ENCODE measurements at regions of chr13 and their contacts with region 1.

Region 1: GRCh38 chr13:109156181-109156935 is 526.9 kb downstream of the MYO16 start:
- DNase-seq: peak; percentile 86
- ATAC-seq: peak; percentile 81
- H3K4me3 ChIP-seq: no peak overlapping the region
- H3K27ac ChIP-seq: peak overlapping the region; percentile 99
- H3K4me1 ChIP-seq: peaks cover 25% of the 10 kb centered on the region
- H3K27me3 ChIP-seq: no peaks in the 10 kb centered on the region
- CTCF ChIP-seq: no peak
- POLR2A ChIP-seq: no peak
- RAD21 ChIP-seq: no peak

Region 2: DNA sequence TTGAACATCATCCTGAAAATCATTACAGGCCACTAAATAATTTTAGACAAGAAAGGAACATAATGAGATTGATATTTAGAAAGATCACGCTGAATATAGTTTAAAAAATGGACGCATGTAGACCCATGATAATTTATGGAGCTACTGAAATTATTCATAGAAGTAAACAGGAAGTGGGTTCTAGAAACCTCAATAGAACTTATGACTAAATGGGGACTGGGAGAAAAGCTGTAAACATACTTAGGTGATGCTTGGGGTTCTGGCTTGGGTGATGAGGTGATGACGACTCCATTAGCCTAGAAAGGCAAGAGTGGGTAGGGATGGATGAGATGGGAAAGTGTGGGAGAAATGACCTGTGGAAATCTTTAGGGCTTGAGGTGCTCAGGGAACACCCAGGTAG is 42.9 kb before region 1 on chr13:
- CTCF ChIA-PET with region 1: no interaction called
- POLR2A ChIA-PET with region 1: no interaction called
- dilution Hi-C with region 1: no loop called
- in situ Hi-C with region 1: no loop called
- intact Hi-C with region 1: no loop called
- DNase-seq: no peak
- ATAC-seq: no peak
- H3K4me3 ChIP-seq: no peak overlapping the region
- H3K27ac ChIP-seq: no peak overlapping the region
- H3K4me1 ChIP-seq: no peaks in the 10 kb centered on the region
- H3K27me3 ChIP-seq: peaks cover 12% of the 10 kb centered on the region
- CTCF ChIP-seq: no peak
- POLR2A ChIP-seq: no peak
- RAD21 ChIP-seq: no peak

Region 3: GRCh38 chr13:109243311-109243951 is 87.1 kb after region 1 on chr13:
- CTCF ChIA-PET with region 1: no interaction called
- POLR2A ChIA-PET with region 1: interaction called, 3 read pairs
- dilution Hi-C with region 1: no loop called
- in situ Hi-C with region 1: no loop called
- intact Hi-C with region 1: loop called (anchors 5 kb)
- DNase-seq: peak; percentile 91
- ATAC-seq: peak; percentile 96
- H3K4me3 ChIP-seq: peak overlapping the region; percentile 1; the same call in 1 of the 2 replicates
- H3K27ac ChIP-seq: peak overlapping the region; percentile 83
- H3K4me1 ChIP-seq: peaks cover 5% of the 10 kb centered on the region; the same call in 1 of the 2 replicates
- H3K27me3 ChIP-seq: no peaks in the 10 kb centered on the region
- CTCF ChIP-seq: no peak
- POLR2A ChIP-seq: no peak
- RAD21 ChIP-seq: no peak

Region 4: DNA sequence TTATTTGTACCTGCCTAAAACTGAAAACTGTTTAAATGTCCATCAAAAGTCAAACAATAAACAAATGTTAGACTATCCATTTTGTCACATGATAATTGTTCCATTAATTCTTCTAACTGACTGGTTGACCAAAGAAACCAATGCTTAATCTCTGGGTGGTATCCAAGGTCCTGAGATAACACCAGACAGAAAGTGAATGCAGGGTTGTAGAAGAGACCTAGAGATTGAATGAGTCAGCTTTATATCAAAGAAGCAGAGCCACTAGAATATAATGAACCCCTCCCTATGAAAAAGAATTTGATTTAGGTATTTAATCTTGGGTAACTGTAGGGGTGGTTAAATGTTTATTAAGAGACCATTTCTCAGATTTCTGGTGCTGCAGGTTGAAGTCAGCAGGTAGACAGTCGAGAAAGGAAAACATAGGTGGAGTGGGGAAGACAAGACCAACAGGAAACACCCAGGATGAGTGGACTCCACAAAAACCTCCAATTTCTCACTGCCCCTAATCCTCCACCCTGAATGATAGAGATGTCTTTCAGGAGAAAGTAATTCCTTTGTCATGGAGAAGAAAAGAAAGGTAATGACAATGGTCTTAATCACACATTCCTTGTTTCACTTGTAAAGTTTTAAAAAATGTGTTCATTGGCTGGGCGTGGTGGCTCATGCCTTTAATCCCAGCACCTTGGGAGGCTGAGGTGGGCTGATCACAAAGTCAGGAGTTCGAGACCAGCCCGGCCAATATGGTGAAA is 93.6 kb after region 1 on chr13:
- CTCF ChIA-PET with region 1: no interaction called
- POLR2A ChIA-PET with region 1: interaction called, 3 read pairs
- dilution Hi-C with region 1: no loop called
- in situ Hi-C with region 1: loop called (anchors 5 kb)
- intact Hi-C with region 1: no loop called
- DNase-seq: no peak
- ATAC-seq: no peak
- H3K4me3 ChIP-seq: no peak overlapping the region
- H3K27ac ChIP-seq: no peak overlapping the region
- H3K4me1 ChIP-seq: no peaks in the 10 kb centered on the region
- H3K27me3 ChIP-seq: no peaks in the 10 kb centered on the region
- CTCF ChIP-seq: no peak
- POLR2A ChIP-seq: no peak
- RAD21 ChIP-seq: no peak